ENCODE measurements at regions of chr1 and their contacts with region 1.

Region 1: DNA sequence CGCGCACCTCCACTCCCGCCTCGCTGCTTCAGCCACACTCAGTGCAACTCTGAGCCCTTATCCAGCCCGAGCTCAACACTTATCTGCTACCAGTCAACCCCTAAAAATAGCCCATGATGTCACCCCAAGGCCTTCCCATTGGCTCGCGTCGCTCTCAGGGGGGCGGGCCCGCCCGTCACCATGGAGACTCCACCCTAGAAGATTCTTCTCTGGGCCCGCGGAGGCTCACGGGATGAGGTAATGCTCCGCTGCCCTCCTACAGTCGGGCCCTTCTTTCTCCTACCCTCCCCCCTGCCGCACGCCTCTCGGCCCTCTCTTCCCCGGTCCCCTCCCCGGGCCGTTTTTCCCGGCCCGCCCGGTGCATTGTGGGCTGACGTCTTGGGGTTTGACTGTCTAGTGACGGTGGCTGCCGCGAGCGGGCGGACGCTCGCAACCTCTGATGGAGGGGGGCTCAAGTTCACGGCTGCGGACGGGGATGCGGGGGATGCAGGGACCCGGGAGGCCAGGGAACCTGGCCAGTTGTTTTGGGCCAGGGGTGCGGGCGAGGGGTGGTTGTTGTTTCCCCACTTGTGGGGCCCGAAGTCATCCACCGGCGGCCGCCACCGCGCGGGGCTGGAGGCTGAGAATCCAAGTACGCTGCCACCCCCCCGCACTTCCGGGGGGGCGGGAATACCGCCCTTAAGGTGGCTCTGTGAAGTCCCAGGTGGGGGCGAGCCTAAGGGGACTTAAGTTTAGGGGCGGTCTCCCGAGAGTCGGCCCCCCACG is at the start of gene JUN:
- DNase-seq: peak; percentile 100
- ATAC-seq: peak; percentile 67
- total RNA-seq, gene JUN: 184 to 199 TPM

Region 2: DNA sequence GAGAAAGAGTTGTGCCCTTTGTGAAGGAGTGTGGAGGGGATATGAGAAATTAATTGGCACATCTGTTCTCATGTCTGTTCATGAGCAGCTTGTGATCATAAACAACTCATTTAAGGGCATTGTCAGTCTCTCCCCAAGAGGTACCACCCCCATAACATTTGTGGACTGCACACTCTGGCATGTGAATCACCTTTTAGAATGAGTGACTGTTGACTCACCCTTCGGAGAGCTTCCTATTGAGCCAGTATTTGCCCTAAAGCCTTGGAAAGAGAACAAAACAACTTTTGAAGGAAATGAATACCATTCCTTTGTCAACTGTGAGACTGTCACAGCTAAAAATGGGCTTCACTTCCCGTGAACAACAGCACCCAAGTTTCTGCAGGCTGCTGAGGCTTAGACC is 56.8 kb before region 1 on chr1:
- intact Hi-C with region 1: no loop called
- DNase-seq: no peak
- ATAC-seq: no peak

Region 3: GRCh38 chr1:58896246-58897183 is 112.3 kb after region 1 on chr1:
- intact Hi-C with region 1: loop called in 1 of 2 experiments (anchors 10 kb)
- DNase-seq: peak; percentile 84 to 92
- ATAC-seq: peak; percentile 81

Region 4: DNA sequence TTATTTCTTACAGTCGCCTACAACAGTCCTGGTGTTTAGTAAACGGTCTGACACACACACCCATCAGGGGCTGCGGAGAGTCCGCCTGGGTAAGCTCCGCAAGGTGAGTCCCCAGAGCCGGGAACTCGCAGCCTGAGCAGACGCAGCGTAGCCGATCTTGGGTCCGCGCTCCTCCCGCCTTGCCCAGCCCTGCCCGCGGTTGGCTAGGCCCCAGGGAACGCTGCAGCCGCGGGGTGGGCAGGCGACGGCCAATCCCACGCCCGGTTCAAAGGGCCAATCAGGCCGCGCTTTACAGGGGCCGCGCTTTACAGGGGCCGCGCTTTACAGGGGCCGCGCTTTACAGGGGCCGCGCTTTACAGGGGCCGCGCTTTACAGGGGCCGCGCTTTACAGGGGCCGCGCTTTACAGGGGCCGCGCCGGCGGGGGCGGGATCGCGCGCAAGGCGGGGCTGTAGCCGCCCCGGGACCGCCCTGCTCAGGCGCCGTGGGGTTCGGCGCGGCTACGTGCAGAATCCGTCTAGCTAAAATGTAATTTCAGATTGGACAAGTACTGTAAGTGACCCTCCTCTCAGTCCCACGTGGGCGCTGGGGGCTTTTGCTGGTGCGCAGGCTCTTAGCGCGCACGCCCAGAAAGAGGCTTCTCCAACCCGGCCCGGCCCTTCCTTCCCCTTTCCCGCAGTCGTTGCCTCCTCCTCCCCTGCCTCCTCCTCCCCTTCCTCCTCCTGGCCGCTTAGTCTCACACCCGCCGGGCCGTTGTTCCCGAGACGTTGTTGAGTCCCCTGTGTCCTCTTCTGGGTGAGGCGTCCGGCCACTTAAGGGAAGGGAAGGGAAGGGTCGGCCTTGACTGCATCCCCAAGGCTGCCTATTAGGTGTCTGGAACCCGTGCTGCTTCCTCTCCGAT is 512.4 kb after region 1 on chr1 and contains the start of gene FGGY:
- intact Hi-C with region 1: loop called in 1 of 2 experiments (anchors 10 kb)
- DNase-seq: peak; percentile 96 to 99
- ATAC-seq: peak; percentile 85
- total RNA-seq, gene FGGY: 17.3 to 24.1 TPM

Region 5: GRCh38 chr1:59699227-59699847 is 915.2 kb after region 1 on chr1:
- intact Hi-C with region 1: loop called in 1 of 2 experiments (anchors 5 kb)
- DNase-seq: no peak
- ATAC-seq: peak; percentile 60